Calu3 (cell line): ENCODE measurements at regions of chr22 and their contacts with region 1.

Region 1: DNA sequence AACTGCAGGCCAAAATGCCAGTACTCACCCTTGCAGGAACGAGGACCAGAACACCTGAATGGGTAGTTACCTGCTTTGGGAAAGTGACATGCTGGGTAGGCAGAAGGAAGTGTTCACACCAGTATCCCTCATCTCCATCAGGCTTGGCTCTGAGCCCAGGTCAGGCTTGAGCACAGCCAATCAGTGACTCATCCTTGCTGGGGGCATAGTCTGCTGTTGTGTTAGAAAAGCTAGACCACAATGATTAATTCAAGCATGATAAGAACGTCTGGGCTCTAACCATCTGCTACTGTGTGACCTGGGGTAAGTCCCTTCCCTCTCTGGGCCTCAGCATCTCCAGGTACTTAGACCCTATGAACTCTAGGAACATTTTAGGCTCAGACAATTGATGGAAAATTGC is 450.4 kb downstream of the MIAT start:
- DNase-seq: peak; percentile 91
- H3K4me3 Mint-ChIP-seq: no peak overlapping the region
- H3K27ac Mint-ChIP-seq: peak overlapping the region; percentile 41
- H3K4me1 Mint-ChIP-seq: peaks cover 54% of the 10 kb centered on the region
- H3K27me3 Mint-ChIP-seq: no peaks in the 10 kb centered on the region
- CTCF ChIP-seq: no peak

Region 2: GRCh38 chr22:26922806-26923205 is 185.0 kb before region 1 on chr22:
- CTCF ChIA-PET with region 1: no interaction called
- intact Hi-C with region 1: no loop called
- DNase-seq: peak; percentile 32
- H3K4me3 Mint-ChIP-seq: no peak overlapping the region
- H3K27ac Mint-ChIP-seq: no peak overlapping the region
- H3K4me1 Mint-ChIP-seq: no peaks in the 10 kb centered on the region
- H3K27me3 Mint-ChIP-seq: peaks cover 100% of the 10 kb centered on the region
- CTCF ChIP-seq: no peak

Region 3: GRCh38 chr22:26937213-26937612 is 170.6 kb before region 1 on chr22:
- CTCF ChIA-PET with region 1: no interaction called
- intact Hi-C with region 1: no loop called
- DNase-seq: no peak
- H3K4me3 Mint-ChIP-seq: no peak overlapping the region
- H3K27ac Mint-ChIP-seq: no peak overlapping the region
- H3K4me1 Mint-ChIP-seq: no peaks in the 10 kb centered on the region
- H3K27me3 Mint-ChIP-seq: peaks cover 59% of the 10 kb centered on the region
- CTCF ChIP-seq: no peak

Region 4: GRCh38 chr22:27120036-27120435 is 12.2 kb after region 1 on chr22:
- CTCF ChIA-PET with region 1: no interaction called
- intact Hi-C with region 1: no loop called
- DNase-seq: no peak
- H3K4me3 Mint-ChIP-seq: no peak overlapping the region
- H3K27ac Mint-ChIP-seq: no peak overlapping the region
- H3K4me1 Mint-ChIP-seq: peaks cover 26% of the 10 kb centered on the region
- H3K27me3 Mint-ChIP-seq: no peaks in the 10 kb centered on the region
- CTCF ChIP-seq: no peak

Region 5: GRCh38 chr22:27142286-27142685 is 34.5 kb after region 1 on chr22:
- CTCF ChIA-PET with region 1: interaction called, 11 read pairs
- intact Hi-C with region 1: no loop called
- DNase-seq: no peak
- H3K4me3 Mint-ChIP-seq: no peak overlapping the region
- H3K27ac Mint-ChIP-seq: no peak overlapping the region
- H3K4me1 Mint-ChIP-seq: peaks cover 24% of the 10 kb centered on the region
- H3K27me3 Mint-ChIP-seq: no peaks in the 10 kb centered on the region
- CTCF ChIP-seq: no peak